Transverse colon (tissue), 4 donors: ENCODE measurements at regions of chr11 and their contacts with region 1.

Region 1: DNA sequence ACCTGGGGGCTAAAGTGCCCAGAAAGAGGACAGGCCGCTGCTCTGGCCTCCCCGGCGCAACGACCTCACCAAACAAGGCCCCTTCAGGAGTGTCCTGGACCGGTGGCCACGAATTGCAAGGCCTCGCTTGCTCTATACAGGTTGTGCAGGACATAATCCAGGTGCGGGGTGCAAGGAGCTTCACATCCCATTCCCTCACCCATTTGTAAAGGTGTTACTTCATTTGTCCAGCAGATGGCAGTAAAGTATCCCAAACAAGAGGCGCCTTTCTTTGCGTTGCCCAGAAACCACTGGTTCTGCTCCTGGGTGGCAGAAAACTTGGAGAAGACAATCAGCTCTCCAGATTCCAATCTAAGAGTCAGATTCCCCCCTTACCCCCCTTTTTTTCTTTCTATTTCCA is 35.9 kb upstream of the PRDM11 start:
- DNase-seq: peak; percentile 33
- H3K4me3 ChIP-seq: no peak overlapping the region
- H3K27ac ChIP-seq: no peak overlapping the region
- H3K4me1 ChIP-seq: no peaks in the 10 kb centered on the region
- H3K27me3 ChIP-seq: peaks cover 24% of the 10 kb centered on the region
- CTCF ChIP-seq: peak; percentile 77 to 84 (median 80)
- EP300 ChIP-seq: no peak
- POLR2A ChIP-seq: no peak

Region 2: GRCh38 chr11:45298718-45299117 is 188.2 kb after region 1 on chr11:
- in situ Hi-C with region 1: loop called in 3 of 4 experiments (anchors 10 kb)
- intact Hi-C with region 1: loop called (anchors 5 kb)
- DNase-seq: no peak
- H3K4me3 ChIP-seq: no peak overlapping the region
- H3K27ac ChIP-seq: no peak overlapping the region
- H3K4me1 ChIP-seq: peaks cover 0 to 9% (median 0%) of the 10 kb centered on the region in 4 donors
- H3K27me3 ChIP-seq: no peaks in the 10 kb centered on the region
- CTCF ChIP-seq: no peak
- EP300 ChIP-seq: no peak
- POLR2A ChIP-seq: no peak

Region 3: DNA sequence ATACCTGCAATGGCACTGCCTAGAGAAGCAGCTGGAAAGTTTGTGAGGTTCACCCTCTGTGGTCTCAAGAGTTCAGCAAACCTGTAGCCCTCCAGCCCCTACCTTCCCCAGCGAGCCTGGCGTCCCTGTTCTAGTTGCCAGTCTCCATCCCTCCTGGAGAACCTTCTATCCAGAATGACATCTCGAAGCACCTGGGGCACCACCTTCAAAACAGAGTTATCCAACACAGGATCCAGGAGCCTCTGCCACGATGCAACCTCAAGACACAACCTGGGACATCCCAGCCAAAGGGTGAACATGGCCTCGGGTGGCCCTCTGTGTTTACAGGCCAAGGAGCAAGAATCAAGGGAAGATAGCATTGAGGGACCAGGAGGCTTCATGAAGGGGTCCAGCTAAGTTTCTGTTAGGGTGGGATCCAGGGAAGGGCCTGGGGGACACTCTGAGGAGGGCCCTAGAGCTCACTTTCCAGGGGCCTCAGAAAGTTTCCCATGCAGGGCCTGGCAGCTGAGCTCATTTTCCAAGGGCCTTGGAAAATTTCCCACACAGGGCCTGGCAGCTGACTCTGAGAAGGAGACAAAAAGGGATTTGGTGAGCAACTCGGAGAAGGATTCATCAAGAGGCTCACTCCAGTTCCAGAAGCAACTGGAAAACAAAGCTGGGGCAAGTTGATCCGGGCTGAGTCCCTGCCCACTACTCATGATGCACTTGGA is 212.5 kb after region 1 on chr11:
- in situ Hi-C with region 1: loop called in 2 of 4 experiments (anchors 10 kb)
- intact Hi-C with region 1: no loop called
- DNase-seq: no peak
- H3K4me3 ChIP-seq: no peak overlapping the region
- H3K27ac ChIP-seq: no peak overlapping the region
- H3K4me1 ChIP-seq: no peaks in the 10 kb centered on the region
- H3K27me3 ChIP-seq: no peaks in the 10 kb centered on the region
- CTCF ChIP-seq: no peak
- EP300 ChIP-seq: no peak
- POLR2A ChIP-seq: no peak

Region 4: DNA sequence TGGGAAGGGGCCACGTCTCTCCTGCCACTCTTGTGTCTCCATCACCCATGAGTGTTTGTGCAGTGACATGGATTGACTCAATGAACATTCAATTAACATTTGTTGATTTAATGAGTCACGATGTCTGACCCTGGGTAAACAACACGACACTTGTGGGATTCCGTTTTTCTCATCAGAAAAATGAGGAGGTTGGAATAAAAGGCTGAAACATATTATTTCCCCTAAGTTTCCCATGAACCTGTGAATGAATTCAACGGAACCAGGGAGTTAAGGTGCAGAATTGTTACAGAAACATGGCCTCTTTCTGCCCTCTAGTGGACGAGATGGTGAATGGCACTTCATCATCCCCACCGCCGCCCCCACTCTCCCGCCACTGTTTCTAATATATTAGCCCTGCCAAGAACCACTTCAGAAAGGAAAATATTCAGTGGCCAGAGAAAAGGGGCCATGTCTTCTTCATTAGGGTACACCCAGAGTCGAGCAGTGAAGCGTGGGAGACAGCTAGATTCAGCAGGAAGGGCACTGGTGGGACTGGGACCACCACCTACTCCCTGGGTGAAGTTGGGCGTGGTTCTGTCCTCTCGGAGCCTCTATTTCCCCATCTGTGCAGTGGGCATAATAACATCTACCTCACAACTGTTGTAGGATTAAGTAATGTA is 221.8 kb after region 1 on chr11:
- in situ Hi-C with region 1: loop called (anchors 5 to 10 kb)
- intact Hi-C with region 1: loop called (anchors 2 kb)
- DNase-seq: peak; percentile 42
- H3K4me3 ChIP-seq: no peak overlapping the region
- H3K27ac ChIP-seq: peak overlapping the region; percentile 33 to 68 (median 57)
- H3K4me1 ChIP-seq: peaks cover 0 to 10% (median 0%) of the 10 kb centered on the region in 4 donors
- H3K27me3 ChIP-seq: no peaks in the 10 kb centered on the region
- CTCF ChIP-seq: peak; percentile 48 to 88 (median 83)
- EP300 ChIP-seq: no peak
- POLR2A ChIP-seq: no peak

Region 5: DNA sequence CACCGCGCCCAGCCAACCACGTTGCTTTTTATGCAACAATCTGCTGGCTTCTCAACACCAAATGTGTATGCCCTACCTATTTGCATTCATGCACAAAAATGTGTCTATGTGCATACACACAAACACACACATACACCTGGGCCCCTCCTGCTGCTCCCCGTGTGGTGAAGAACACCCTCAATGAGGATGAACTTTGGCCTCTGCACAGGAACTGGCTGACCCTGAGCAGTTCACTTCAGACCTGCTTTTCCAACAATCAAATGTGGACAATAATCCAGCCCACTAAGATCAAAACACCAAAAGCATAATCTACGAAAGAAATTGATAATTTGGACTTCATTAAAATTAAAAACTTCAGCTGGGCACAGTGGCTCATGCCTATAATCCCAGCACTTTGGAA is 669.0 kb after region 1 on chr11:
- in situ Hi-C with region 1: loop called in 1 of 4 experiments (anchors 10 kb)
- intact Hi-C with region 1: no loop called
- DNase-seq: no peak
- H3K4me3 ChIP-seq: no peak overlapping the region
- H3K27ac ChIP-seq: no peak overlapping the region
- H3K4me1 ChIP-seq: no peaks in the 10 kb centered on the region
- H3K27me3 ChIP-seq: no peaks in the 10 kb centered on the region
- CTCF ChIP-seq: no peak
- EP300 ChIP-seq: no peak
- POLR2A ChIP-seq: no peak